Heart left ventricle (tissue), 16 donors: ENCODE measurements at regions of chr1 and their contacts with region 1.

Region 1: DNA sequence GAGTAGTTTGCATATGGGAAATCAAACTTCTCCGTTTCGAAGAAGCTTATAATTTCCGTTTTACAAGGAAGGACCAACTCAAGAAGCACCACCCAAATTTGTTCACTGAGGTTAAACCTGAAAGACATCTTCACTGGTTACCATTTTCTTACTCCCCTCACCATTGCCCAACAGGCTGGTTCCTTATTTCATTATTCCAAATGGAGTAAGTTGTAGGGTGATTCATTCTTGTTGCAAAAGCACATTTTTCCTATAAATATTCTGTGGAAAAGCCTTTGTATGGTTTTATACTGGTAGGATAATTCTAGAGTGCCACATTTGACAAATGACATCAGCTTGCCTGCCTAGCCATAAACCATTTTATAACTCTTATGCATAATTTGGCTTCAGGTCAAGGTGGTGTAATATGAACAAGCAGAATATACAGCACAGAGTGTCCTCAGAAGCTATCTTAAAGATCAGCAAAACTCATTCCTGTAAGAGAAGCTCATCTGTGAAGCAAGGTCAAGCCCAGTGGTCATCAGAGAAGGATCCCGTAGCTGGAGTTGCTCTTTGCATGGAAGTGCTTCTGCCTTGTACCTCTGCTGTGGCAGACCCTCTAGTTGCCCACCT is 24.1 kb upstream of the C1orf21 start:
- DNase-seq: no peak
- ATAC-seq: no peak
- H3K4me3 ChIP-seq: no peak overlapping the region
- H3K27ac ChIP-seq: no peak overlapping the region
- H3K4me1 ChIP-seq: no peaks in the 10 kb centered on the region
- H3K27me3 ChIP-seq: no peaks in the 10 kb centered on the region
- CTCF ChIP-seq: no peak
- POLR2A ChIP-seq: no peak

Region 2: DNA sequence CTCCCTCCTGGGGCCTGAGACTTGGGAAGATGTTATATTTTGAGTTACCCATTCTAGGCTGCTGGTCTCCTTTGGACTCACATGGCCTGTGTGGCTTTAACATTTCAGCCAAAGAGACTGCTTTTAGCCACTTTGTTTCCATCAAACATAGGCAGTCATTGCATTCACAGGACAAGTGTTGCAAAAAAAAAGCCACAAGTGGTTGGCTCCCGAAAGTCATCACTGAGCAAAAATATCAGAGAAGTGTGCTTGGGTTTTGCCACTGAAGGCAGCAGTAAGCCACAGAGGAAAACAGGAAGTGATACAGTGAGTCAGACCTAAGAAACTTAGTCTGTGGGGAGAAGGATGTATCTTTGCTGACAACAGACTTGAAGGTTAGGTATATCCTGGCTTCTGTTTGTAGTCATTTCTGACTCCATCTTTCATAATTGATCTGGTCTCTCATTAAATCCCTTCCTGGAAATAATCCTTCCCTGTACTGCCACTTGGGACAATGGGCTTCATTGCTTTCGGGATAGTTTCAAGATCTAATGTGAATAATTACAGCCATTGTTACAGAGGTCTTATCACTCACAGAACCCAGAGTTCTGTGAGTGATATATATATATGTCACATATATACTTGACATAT is 406.1 kb before region 1 on chr1:
- intact Hi-C with region 1: no loop called
- DNase-seq: no peak
- ATAC-seq: peak in 3 of 4 donors; percentile 74 to 86 (median 74)
- H3K4me3 ChIP-seq: no peak overlapping the region
- H3K27ac ChIP-seq: peak overlapping the region in 11 of 12 donors; percentile 28 to 86 (median 45)
- H3K4me1 ChIP-seq: peaks cover 0 to 55% (median 11%) of the 10 kb centered on the region in 12 donors
- H3K27me3 ChIP-seq: no peaks in the 10 kb centered on the region
- CTCF ChIP-seq: peak in 5 of 12 donors; percentile 9 to 38 (median 15)
- POLR2A ChIP-seq: no peak

Region 3: DNA sequence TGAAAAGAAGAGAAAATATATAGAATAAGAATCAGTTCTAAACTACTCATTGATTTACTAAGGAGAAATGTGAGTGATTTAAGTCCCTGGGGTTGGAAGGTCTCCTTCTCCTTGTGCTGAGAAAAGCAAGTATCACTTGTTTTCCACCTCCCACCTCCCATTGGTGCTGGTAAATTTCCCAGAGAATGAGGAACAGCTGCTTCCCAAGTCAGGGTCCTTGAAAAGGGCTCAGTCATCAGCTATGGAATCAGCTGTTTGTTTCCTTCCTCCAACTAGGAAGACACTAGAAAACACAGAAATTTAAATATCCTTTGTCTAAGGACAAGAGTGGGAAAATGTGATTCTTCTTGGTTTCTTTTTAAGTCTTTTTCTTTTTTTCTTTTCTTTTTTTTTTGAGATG is 107.2 kb before region 1 on chr1:
- intact Hi-C with region 1: loop called in 1 of 10 experiments (anchors 5 kb)
- DNase-seq: no peak
- ATAC-seq: peak in 1 of 4 donors; percentile 48
- H3K4me3 ChIP-seq: no peak overlapping the region
- H3K27ac ChIP-seq: peak overlapping the region in 1 of 12 donors; percentile 11
- H3K4me1 ChIP-seq: peaks cover 0 to 19% (median 4%) of the 10 kb centered on the region in 12 donors
- H3K27me3 ChIP-seq: no peaks in the 10 kb centered on the region
- CTCF ChIP-seq: no peak
- POLR2A ChIP-seq: no peak

Region 4: GRCh38 chr1:184329962-184330868 is 32.6 kb before region 1 on chr1:
- intact Hi-C with region 1: loop called in 1 of 10 experiments (anchors 5 kb)
- DNase-seq: peak in 2 of 5 donors; percentile 25 to 40
- ATAC-seq: peak; percentile 42 to 78 (median 64)
- H3K4me3 ChIP-seq: no peak overlapping the region
- H3K27ac ChIP-seq: peak overlapping the region in 9 of 12 donors; percentile 13 to 46 (median 37)
- H3K4me1 ChIP-seq: peaks cover 0 to 19% (median 9%) of the 10 kb centered on the region in 12 donors
- H3K27me3 ChIP-seq: no peaks in the 10 kb centered on the region
- CTCF ChIP-seq: no peak
- POLR2A ChIP-seq: no peak